ENCODE measurements at regions of chr2 and their contacts with region 1.

Region 1: DNA sequence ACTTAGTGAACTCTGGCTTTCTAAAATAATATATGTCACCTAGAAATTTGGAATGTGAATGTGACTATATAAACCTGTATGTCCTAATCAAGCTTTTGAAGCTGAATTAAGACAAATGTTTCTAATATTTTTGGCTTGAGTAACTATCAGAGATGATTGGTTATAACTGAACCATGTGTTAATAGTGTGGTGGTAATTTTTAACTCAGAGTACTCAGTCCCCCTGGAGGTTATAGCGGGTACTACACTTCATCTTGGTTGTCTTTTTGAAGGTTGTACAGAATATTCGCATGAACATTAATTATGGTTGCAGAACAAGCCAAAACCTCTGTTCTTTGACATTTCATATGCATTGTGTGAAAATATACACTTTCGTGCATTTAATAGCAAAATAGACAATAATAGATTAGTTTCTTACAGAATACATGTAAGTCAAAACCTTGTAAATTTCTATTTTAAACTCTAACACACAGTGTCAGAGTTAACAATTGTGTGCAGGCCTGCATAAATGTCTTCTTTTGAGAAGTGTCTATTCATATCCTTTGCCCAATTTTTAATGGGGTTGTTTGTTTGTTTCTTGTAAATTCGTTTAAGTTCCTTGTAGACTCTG is 86.0 kb downstream of the OSBPL6 start:
- DNase-seq: peak; percentile 36
- H3K4me3 Mint-ChIP-seq: no peak overlapping the region
- H3K27ac Mint-ChIP-seq: no peak overlapping the region
- H3K4me1 Mint-ChIP-seq: peaks cover 31% of the 10 kb centered on the region
- H3K27me3 Mint-ChIP-seq: no peaks in the 10 kb centered on the region
- CTCF ChIP-seq: peak; percentile 51

Region 2: DNA sequence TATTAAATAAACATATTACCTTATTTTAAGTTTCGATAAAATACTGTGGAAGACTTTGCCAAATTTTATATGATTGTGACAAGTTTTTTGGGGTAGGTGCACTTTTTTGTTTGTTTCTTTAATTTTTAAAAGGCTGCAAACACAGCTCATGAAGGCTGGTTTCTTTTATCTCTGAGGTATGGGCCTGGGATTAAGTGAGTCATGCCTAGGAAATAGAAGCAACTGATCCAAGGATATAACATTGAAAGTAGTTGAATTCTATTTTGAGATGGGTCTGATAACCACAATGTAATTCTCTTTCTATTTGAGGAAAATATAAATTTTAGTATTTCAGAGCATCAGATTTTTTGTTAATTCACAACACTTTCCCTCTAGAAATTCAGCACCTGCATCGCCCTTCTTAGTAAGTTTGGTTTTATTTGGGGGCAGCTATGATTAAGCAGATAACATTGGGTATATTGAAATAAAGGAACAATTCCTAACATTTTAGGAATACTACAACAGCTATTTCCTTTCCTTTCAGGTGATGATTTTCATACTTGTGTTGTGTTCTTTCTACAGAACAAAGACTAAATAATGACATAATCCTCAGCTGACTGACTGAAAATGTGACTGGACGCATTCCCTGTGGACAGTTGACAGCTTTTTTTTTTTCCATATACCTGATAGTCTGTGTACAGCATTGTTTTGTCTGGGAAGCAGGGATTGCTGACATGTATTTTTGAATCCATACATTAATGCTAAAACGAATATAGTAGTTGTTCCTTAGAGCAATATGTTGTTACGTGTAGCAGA is 151.3 kb before region 1 on chr2:
- CTCF ChIA-PET with region 1: no interaction called
- intact Hi-C with region 1: loop called (anchors 5 kb)
- DNase-seq: no peak
- H3K4me3 Mint-ChIP-seq: no peak overlapping the region
- H3K27ac Mint-ChIP-seq: no peak overlapping the region
- H3K4me1 Mint-ChIP-seq: peaks cover 8% of the 10 kb centered on the region
- H3K27me3 Mint-ChIP-seq: no peaks in the 10 kb centered on the region
- CTCF ChIP-seq: no peak

Measured in Calu3 (cell line).